Transverse colon (tissue), 4 donors: ENCODE measurements at regions of chr17 and their contacts with region 1.

Region 1: GRCh38 chr17:79244665-79245064 is 170.0 kb downstream of the ENGASE start:
- DNase-seq: no peak
- H3K4me3 ChIP-seq: no peak overlapping the region
- H3K27ac ChIP-seq: no peak overlapping the region
- H3K4me1 ChIP-seq: no peaks in the 10 kb centered on the region
- H3K27me3 ChIP-seq: peaks cover 4% of the 10 kb centered on the region
- CTCF ChIP-seq: no peak
- EP300 ChIP-seq: no peak
- POLR2A ChIP-seq: no peak

Region 2: GRCh38 chr17:79090443-79091225 is 154.0 kb before region 1 on chr17:
- in situ Hi-C with region 1: no loop called
- intact Hi-C with region 1: no loop called
- DNase-seq: no peak
- H3K4me3 ChIP-seq: no peak overlapping the region
- H3K27ac ChIP-seq: no peak overlapping the region
- H3K4me1 ChIP-seq: peaks cover 0 to 13% (median 3%) of the 10 kb centered on the region in 4 donors
- H3K27me3 ChIP-seq: peaks cover 56% of the 10 kb centered on the region
- CTCF ChIP-seq: peak; percentile 16 to 47 (median 37)
- EP300 ChIP-seq: no peak
- POLR2A ChIP-seq: peak; percentile 3

Region 3: GRCh38 chr17:79231766-79232287 is 12.8 kb before region 1 on chr17:
- in situ Hi-C with region 1: no loop called
- intact Hi-C with region 1: loop called (anchors 1 kb)
- DNase-seq: no peak
- H3K4me3 ChIP-seq: no peak overlapping the region
- H3K27ac ChIP-seq: no peak overlapping the region
- H3K4me1 ChIP-seq: no peaks in the 10 kb centered on the region
- H3K27me3 ChIP-seq: no peaks in the 10 kb centered on the region
- CTCF ChIP-seq: no peak
- EP300 ChIP-seq: no peak
- POLR2A ChIP-seq: no peak

Region 4: GRCh38 chr17:79272666-79273219 is 28.1 kb after region 1 on chr17:
- in situ Hi-C with region 1: no loop called
- intact Hi-C with region 1: no loop called
- DNase-seq: no peak
- H3K4me3 ChIP-seq: no peak overlapping the region
- H3K27ac ChIP-seq: no peak overlapping the region
- H3K4me1 ChIP-seq: no peaks in the 10 kb centered on the region
- H3K27me3 ChIP-seq: peaks cover 13% of the 10 kb centered on the region
- CTCF ChIP-seq: no peak
- EP300 ChIP-seq: no peak
- POLR2A ChIP-seq: no peak

Region 5: GRCh38 chr17:79340333-79341221 is 95.9 kb after region 1 on chr17:
- in situ Hi-C with region 1: no loop called
- intact Hi-C with region 1: no loop called
- DNase-seq: peak; percentile 44
- H3K4me3 ChIP-seq: no peak overlapping the region
- H3K27ac ChIP-seq: peak overlapping the region in 1 of 4 donors; percentile 58
- H3K4me1 ChIP-seq: peaks cover 0 to 5% (median 0%) of the 10 kb centered on the region in 4 donors
- H3K27me3 ChIP-seq: peaks cover 4% of the 10 kb centered on the region
- CTCF ChIP-seq: no peak
- EP300 ChIP-seq: no peak
- POLR2A ChIP-seq: no peak